Naive thymus-derived CD4-positive, alpha-beta T cell (primary cell): ENCODE measurements at regions of chr7 and their contacts with region 1.

Region 1: DNA sequence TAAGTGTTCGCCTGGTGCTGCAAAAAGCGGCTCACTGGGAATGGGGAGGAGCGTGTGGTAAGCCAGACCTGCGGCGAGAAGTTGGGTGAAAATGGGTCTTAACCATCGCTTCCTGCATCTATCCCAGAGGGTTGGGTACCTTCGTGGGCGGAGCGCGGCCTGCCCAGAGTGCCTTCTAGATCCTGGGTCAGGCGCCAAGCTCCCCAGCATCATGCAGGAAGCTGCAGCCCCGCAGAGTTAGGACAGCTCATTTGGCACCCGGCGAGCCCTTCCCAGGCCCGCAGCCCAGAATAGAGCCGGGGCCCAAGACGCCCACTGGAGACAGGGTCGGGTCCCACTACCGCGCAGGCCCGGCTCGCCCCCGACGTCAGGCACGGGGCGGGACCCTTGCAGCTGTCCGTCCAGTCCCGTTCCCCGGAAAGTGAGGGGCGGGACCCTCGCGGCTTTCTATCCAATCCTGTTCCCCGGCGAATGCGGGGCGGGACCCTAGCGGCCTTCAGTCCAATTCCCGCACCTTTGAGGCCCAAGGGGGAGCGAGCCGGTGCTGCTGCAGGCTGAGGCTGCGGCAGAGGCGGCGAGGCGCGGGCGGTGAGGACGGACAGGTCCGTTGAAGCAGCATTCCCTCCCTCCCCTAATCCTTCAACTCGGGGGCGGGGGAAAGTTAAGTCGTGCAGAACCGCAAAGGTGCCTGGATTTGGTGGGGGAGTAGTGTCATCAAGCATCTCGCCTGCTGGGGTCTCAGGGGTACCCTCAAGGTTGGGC is at the start of gene CROT:
- DNase-seq: peak; percentile 85 to 94 (median 92)
- ATAC-seq: peak; percentile 99
- H3K4me3 ChIP-seq: peak within 1 kb of the TSS; percentile 86
- H3K4me3 Mint-ChIP-seq: peak within 1 kb of the TSS; percentile 81 to 100 (median 92)
- H3K27ac ChIP-seq: peak within 1 kb of the TSS; percentile 87
- H3K27ac Mint-ChIP-seq: peak within 1 kb of the TSS; percentile 88 to 98 (median 96)
- H3K4me1 ChIP-seq: peaks cover 10% of the 10 kb centered on the region in 2 donors
- H3K4me1 Mint-ChIP-seq: peaks cover 12 to 56% (median 46%) of the 10 kb centered on the region in 7 donors
- H3K27me3 ChIP-seq: no peaks in the 10 kb centered on the region
- H3K27me3 Mint-ChIP-seq: no peaks in the 10 kb centered on the region
- total RNA-seq, gene CROT: 7.7 to 15.2 (median 11.3) TPM

Region 2: GRCh38 chr7:87059525-87060287 is 285.6 kb before region 1 on chr7 and contains the start of gene ELAPOR2:
- CTCF ChIA-PET with region 1: no interaction called
- POLR2A ChIA-PET with region 1: interaction called, 3 read pairs
- intact Hi-C with region 1: loop called in 1 of 2 experiments (anchors 1 kb)
- DNase-seq: peak; percentile 68 to 83 (median 75)
- ATAC-seq: peak; percentile 97
- H3K4me3 ChIP-seq: peak within 1 kb of the TSS; percentile 66
- H3K4me3 Mint-ChIP-seq: peak within 1 kb of the TSS; percentile 78 to 88 (median 84)
- H3K27ac ChIP-seq: peak within 1 kb of the TSS; percentile 52
- H3K27ac Mint-ChIP-seq: peak within 1 kb of the TSS in 8 of 9 donors; percentile 6 to 89 (median 70)
- H3K4me1 ChIP-seq: peaks cover 9 to 10% of the 10 kb centered on the region in 2 donors
- H3K4me1 Mint-ChIP-seq: peaks cover 7 to 18% (median 14%) of the 10 kb centered on the region in 7 donors
- H3K27me3 ChIP-seq: no peaks in the 10 kb centered on the region
- H3K27me3 Mint-ChIP-seq: peaks cover 9 to 23% (median 14%) of the 10 kb centered on the region in 5 donors
- total RNA-seq, gene ELAPOR2: 5.3 to 11.0 (median 6.4) TPM

Region 3: GRCh38 chr7:87312215-87312865 is 33.0 kb before region 1 on chr7:
- CTCF ChIA-PET with region 1: interaction called, 3 read pairs
- POLR2A ChIA-PET with region 1: interaction called, 3 read pairs
- intact Hi-C with region 1: loop called (anchors 1 to 2 kb)
- DNase-seq: peak; percentile 25 to 70 (median 55)
- ATAC-seq: peak; percentile 98
- H3K4me3 ChIP-seq: no peak overlapping the region
- H3K4me3 Mint-ChIP-seq: no peak overlapping the region
- H3K27ac ChIP-seq: no peak overlapping the region
- H3K27ac Mint-ChIP-seq: no peak overlapping the region
- H3K4me1 ChIP-seq: peaks cover 0 to 4% of the 10 kb centered on the region in 2 donors
- H3K4me1 Mint-ChIP-seq: peaks cover 0 to 3% (median 0%) of the 10 kb centered on the region in 7 donors
- H3K27me3 ChIP-seq: no peaks in the 10 kb centered on the region
- H3K27me3 Mint-ChIP-seq: peaks cover 0 to 12% (median 0%) of the 10 kb centered on the region in 5 donors

Region 4: GRCh38 chr7:87328281-87328680 is 17.1 kb before region 1 on chr7:
- CTCF ChIA-PET with region 1: no interaction called
- POLR2A ChIA-PET with region 1: no interaction called
- intact Hi-C with region 1: no loop called
- DNase-seq: no peak
- ATAC-seq: no peak
- H3K4me3 ChIP-seq: no peak overlapping the region
- H3K4me3 Mint-ChIP-seq: no peak overlapping the region
- H3K27ac ChIP-seq: no peak overlapping the region
- H3K27ac Mint-ChIP-seq: no peak overlapping the region
- H3K4me1 ChIP-seq: no peaks in the 10 kb centered on the region
- H3K4me1 Mint-ChIP-seq: peaks cover 0 to 3% (median 0%) of the 10 kb centered on the region in 7 donors
- H3K27me3 ChIP-seq: no peaks in the 10 kb centered on the region
- H3K27me3 Mint-ChIP-seq: no peaks in the 10 kb centered on the region

Region 5: DNA sequence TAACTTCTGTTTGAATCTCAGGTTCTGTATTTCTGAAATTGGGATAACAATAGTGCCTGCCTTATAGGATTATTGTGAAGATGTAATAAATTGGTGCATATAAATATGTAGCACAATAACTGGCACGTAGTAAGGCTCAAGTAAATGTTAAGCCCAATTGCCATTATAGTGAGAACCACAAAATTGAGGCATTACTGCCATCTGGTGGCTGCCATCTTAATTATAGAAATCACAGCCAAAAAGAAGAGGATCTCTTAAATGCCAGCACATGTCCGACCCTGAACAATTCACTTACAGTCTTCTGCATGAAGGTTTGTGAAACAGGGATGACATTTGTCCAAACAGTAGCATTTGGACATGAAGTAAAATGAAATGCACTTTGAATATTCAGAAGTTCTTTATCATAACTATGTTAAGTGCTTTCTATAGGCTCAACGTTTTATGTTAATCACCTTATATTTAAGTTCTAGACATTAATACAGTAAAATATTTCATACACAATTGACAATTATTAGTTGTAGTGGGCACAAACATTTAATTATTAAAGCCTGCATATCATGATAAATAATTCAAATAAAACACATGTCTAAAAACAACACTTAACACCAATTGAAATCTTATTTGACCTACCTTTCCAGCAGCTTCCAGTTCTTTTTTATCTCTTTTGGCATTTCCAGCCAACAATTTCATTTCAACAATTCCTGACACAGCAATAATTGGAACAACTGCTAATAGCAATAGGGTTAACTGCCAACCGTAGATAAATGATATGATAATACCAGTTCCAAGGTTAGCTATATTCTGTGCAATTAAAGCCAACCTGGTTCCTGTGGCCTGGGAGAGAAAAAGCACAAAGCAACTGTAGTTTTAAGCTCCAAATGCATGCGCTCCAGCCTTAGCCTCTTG is 71.6 kb after region 1 on chr7:
- CTCF ChIA-PET with region 1: no interaction called
- POLR2A ChIA-PET with region 1: no interaction called
- intact Hi-C with region 1: loop called (anchors 1 to 2 kb)
- DNase-seq: peak in 8 of 9 donors; percentile 43 to 73 (median 63)
- ATAC-seq: peak; percentile 82
- H3K4me3 ChIP-seq: no peak overlapping the region
- H3K4me3 Mint-ChIP-seq: no peak overlapping the region
- H3K27ac ChIP-seq: no peak overlapping the region
- H3K27ac Mint-ChIP-seq: no peak overlapping the region
- H3K4me1 ChIP-seq: no peaks in the 10 kb centered on the region
- H3K4me1 Mint-ChIP-seq: no peaks in the 10 kb centered on the region
- H3K27me3 ChIP-seq: no peaks in the 10 kb centered on the region
- H3K27me3 Mint-ChIP-seq: peaks cover 0 to 7% (median 0%) of the 10 kb centered on the region in 5 donors

Region 6: DNA sequence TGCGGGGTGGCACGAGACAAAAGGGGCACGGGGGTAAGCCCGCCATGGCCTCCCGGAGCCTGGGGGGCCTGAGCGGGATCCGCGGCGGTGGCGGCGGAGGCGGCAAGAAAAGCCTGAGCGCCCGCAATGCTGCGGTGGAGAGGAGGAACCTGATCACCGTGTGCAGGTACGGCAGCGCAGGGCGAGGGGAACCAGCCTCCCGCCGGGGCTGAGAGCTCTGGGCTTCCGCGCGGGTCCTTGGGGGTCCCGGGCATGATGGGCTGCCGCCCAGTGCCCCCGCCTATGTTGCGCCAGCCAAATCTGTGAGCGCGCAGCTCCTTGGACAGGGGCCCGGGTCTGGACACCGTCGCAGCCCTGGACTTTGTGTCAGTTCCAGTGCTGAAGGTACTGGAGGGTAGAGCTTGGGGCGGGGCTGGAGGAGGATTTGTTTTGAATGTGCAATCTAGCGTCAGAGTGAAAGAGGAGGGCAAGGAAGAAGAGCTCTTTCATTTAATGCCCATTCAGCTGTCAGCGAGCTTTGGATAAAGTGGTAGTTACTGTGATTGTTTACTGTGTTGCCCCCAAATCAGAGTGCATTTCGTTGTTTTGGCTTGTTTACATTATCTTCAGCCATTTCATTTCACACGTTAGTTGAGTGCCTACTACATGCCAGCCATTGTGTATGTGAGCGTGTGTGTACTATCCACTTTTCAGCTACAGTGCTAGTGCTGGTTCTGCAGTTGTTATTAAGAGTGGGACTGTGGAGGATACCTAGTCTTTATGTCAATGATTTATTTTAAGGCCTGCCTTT is 283.6 kb after region 1 on chr7:
- CTCF ChIA-PET with region 1: no interaction called
- POLR2A ChIA-PET with region 1: no interaction called
- intact Hi-C with region 1: loop called (anchors 1 kb)
- DNase-seq: peak in 8 of 9 donors; percentile 15 to 51 (median 36)
- ATAC-seq: peak; percentile 29
- H3K4me3 ChIP-seq: peak overlapping the region; percentile 64
- H3K4me3 Mint-ChIP-seq: peak overlapping the region; percentile 74 to 92 (median 83)
- H3K27ac ChIP-seq: peak overlapping the region; percentile 38
- H3K27ac Mint-ChIP-seq: peak overlapping the region in 5 of 9 donors; percentile 30 to 83 (median 54)
- H3K4me1 ChIP-seq: peaks cover 0 to 5% of the 10 kb centered on the region in 2 donors
- H3K4me1 Mint-ChIP-seq: peaks cover 7 to 14% (median 10%) of the 10 kb centered on the region in 7 donors
- H3K27me3 ChIP-seq: no peaks in the 10 kb centered on the region
- H3K27me3 Mint-ChIP-seq: peaks cover 4 to 32% (median 21%) of the 10 kb centered on the region in 5 donors

Region 7: GRCh38 chr7:87933945-87934698 is 588.8 kb after region 1 on chr7 and contains the start of gene ADAM22:
- CTCF ChIA-PET with region 1: no interaction called
- POLR2A ChIA-PET with region 1: no interaction called
- intact Hi-C with region 1: loop called in 1 of 2 experiments (anchors 2 kb)
- DNase-seq: peak; percentile 49 to 80 (median 74)
- ATAC-seq: peak; percentile 96
- H3K4me3 ChIP-seq: peak within 1 kb of the TSS; percentile 80
- H3K4me3 Mint-ChIP-seq: peak within 1 kb of the TSS; percentile 84 to 93 (median 91)
- H3K27ac ChIP-seq: peak within 1 kb of the TSS; percentile 19
- H3K27ac Mint-ChIP-seq: peak within 1 kb of the TSS in 7 of 9 donors; percentile 13 to 82 (median 65)
- H3K4me1 ChIP-seq: peaks cover 4 to 6% of the 10 kb centered on the region in 2 donors
- H3K4me1 Mint-ChIP-seq: peaks cover 0 to 21% (median 12%) of the 10 kb centered on the region in 7 donors
- H3K27me3 ChIP-seq: no peaks in the 10 kb centered on the region
- H3K27me3 Mint-ChIP-seq: peaks cover 0 to 54% (median 4%) of the 10 kb centered on the region in 5 donors
- total RNA-seq, gene ADAM22: 1.1 to 7.1 (median 3.1) TPM